Activated B cell treated with CpG ODN at 0.5 μM for 24 hours (primary cell): ENCODE measurements at regions of chr11 and their contacts with region 1.

Region 1: DNA sequence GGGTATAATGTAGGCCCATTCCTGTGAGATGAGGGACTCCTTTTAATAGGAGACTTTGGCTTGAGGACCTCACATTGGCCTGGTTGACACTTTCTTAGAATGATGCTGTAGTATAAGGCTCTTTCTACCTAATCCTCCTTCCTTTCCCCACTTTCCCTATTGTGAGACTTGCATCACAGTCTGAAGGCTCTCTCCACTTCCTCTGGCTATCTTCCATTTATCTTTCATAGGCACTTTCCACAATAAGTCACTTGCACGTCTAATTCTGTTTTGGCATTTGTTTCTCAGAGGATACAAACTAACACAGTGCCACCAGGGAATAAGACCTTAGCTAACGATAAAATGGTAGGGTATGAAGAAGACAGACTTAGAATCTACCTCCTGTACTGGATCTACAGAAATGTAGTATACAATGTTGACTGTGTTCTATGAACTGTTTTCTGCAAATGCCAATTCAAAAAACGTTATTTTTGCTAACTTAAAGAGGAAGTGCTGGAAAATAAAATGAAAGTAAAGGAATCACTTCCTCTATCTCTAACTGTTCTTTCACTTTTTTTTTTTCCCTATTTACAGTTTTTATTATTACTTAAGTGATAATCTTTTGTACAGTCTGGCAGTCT is 17.9 kb upstream of the PDE3B start:
- DNase-seq: no peak
- ATAC-seq: peak; percentile 21
- H3K4me3 Mint-ChIP-seq: peak overlapping the region; percentile 44
- H3K27ac Mint-ChIP-seq: peak overlapping the region; percentile 78
- H3K4me1 Mint-ChIP-seq: peaks cover 27% of the 10 kb centered on the region
- H3K27me3 Mint-ChIP-seq: no peaks in the 10 kb centered on the region
- CTCF ChIP-seq: no peak

Region 2: DNA sequence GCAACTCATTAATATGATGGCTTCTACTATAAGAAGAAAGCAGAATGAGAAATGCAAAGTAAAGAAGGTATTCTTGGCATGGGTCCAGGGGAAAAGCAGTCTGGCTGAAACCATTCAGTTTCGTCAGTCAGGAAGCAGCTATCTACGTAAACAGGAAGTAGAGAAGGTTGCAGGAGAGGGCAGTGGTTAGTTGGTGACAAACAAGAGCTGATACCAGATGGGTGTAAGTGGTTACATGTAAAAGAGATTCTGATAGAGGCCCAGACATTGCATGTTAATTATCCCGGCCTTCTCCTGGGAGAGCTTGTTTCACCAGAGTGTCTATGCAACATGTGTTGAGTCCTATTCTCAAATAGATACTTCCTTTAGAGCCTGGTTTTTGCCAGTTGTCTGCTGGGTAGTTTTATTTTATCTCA is 47.1 kb before region 1 on chr11:
- CTCF ChIA-PET with region 1: no interaction called
- POLR2A ChIA-PET with region 1: interaction called, 5 read pairs
- intact Hi-C with region 1: loop called (anchors 5 kb)
- DNase-seq: no peak
- ATAC-seq: peak; percentile 94
- H3K4me3 Mint-ChIP-seq: peak overlapping the region; percentile 50
- H3K27ac Mint-ChIP-seq: peak overlapping the region; percentile 77
- H3K4me1 Mint-ChIP-seq: peaks cover 33% of the 10 kb centered on the region
- H3K27me3 Mint-ChIP-seq: peaks cover 1% of the 10 kb centered on the region
- CTCF ChIP-seq: no peak

Region 3: DNA sequence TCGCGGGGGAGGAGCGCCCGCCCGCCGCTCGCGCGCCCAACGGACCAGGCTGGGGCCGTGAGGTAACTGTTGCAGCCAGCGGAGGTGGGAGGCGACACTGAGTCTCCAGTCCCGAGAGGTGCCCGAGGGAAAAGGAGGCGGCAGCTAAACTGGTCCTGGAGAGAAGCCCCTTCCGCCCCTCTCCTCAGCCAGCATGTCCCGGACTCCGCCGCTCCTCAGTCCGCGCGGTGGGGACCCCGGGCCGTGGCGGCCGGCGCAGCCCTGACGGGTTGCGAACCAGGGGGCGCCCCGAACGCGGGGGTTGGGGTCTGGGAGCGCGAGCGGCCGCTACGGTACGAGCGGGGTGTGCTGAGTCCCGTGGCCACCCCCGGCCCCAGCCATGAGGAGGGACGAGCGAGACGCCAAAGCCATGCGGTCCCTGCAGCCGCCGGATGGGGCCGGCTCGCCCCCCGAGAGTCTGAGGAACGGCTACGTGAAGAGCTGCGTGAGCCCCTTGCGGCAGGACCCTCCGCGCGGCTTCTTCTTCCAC is 18.1 kb after region 1 on chr11 and contains the start of gene PDE3B:
- CTCF ChIA-PET with region 1: no interaction called
- POLR2A ChIA-PET with region 1: interaction called, 4 read pairs
- intact Hi-C with region 1: loop called (anchors 2 kb)
- DNase-seq: peak; percentile 56
- ATAC-seq: peak; percentile 72
- H3K4me3 Mint-ChIP-seq: peak within 1 kb of the TSS; percentile 86
- H3K27ac Mint-ChIP-seq: no peak within 1 kb of the TSS
- H3K4me1 Mint-ChIP-seq: peaks cover 10% of the 10 kb centered on the region
- H3K27me3 Mint-ChIP-seq: peaks cover 17% of the 10 kb centered on the region
- CTCF ChIP-seq: no peak
- total RNA-seq, gene PDE3B: 11.3 and 13.4 TPM in 2 replicates